Ascending aorta (tissue), 2 donors: ENCODE measurements at regions of chr9 and their contacts with region 1.

Region 1: DNA sequence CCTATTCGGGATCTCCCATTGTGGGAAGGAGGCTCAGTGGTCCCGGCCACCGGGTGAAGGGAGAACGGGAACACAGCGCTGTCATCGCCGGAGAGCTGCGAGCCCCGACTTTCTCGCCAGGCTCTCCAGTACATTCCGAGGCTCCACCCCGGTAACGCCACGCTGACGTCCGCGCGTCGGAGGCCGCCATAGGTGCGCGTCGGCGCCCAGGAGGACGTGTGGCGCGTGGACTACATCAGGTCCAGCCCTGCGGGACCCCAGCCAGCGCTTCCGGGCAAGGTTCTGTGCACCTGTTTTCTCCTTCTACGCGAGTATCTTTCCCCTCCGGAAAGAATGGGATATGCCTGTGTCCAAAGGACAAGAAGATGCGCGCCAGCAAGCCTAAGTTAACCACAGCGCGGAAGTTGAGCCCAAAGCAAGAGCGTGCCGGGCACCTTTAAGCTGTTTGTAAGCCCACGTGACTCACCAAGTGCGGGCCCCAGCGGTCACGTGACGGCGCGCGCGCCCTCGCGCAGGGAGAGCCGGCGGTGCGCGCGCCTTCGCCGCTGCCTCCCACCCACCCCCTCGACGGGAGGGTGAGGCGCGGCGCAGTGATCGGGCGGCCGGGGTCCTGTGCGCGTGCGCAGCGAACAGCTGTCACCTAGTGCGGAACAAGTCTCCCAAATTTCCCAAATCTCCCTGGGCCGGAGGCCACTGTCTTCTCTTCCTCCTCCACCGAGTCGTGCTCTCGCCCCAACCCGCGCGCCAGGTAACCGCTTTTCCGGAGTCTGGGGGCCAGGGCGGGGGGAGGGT is at the start of gene KDM4C:
- DNase-seq: peak; percentile 88 to 98
- H3K4me3 ChIP-seq: peak within 1 kb of the TSS; percentile 66 to 98
- H3K27ac ChIP-seq: peak within 1 kb of the TSS; percentile 98 to 99
- H3K4me1 ChIP-seq: peaks cover 3 to 4% of the 10 kb centered on the region in 2 donors
- H3K27me3 ChIP-seq: no peaks in the 10 kb centered on the region
- CTCF ChIP-seq: no peak
- total RNA-seq, gene KDM4C: 12.7 TPM

Region 2: GRCh38 chr9:6215562-6215961 is 542.1 kb before region 1 on chr9 and contains the start of gene IL33:
- intact Hi-C with region 1: loop called (anchors 5 kb)
- DNase-seq: no peak
- H3K4me3 ChIP-seq: peak within 1 kb of the TSS; percentile 44 to 53
- H3K27ac ChIP-seq: peak within 1 kb of the TSS; percentile 41 to 77
- H3K4me1 ChIP-seq: peaks cover 0 to 19% of the 10 kb centered on the region in 2 donors
- H3K27me3 ChIP-seq: no peaks in the 10 kb centered on the region
- CTCF ChIP-seq: no peak
- total RNA-seq, gene IL33: 38.0 TPM

Region 3: GRCh38 chr9:6566409-6567139 is 191.1 kb before region 1 on chr9:
- intact Hi-C with region 1: loop called (anchors 5 kb)
- DNase-seq: peak; percentile 40 to 88
- H3K4me3 ChIP-seq: peak overlapping the region in 1 of 2 donors; percentile 27
- H3K27ac ChIP-seq: peak overlapping the region; percentile 72 to 84
- H3K4me1 ChIP-seq: peaks cover 0 to 14% of the 10 kb centered on the region in 2 donors
- H3K27me3 ChIP-seq: no peaks in the 10 kb centered on the region
- CTCF ChIP-seq: no peak

Region 4: DNA sequence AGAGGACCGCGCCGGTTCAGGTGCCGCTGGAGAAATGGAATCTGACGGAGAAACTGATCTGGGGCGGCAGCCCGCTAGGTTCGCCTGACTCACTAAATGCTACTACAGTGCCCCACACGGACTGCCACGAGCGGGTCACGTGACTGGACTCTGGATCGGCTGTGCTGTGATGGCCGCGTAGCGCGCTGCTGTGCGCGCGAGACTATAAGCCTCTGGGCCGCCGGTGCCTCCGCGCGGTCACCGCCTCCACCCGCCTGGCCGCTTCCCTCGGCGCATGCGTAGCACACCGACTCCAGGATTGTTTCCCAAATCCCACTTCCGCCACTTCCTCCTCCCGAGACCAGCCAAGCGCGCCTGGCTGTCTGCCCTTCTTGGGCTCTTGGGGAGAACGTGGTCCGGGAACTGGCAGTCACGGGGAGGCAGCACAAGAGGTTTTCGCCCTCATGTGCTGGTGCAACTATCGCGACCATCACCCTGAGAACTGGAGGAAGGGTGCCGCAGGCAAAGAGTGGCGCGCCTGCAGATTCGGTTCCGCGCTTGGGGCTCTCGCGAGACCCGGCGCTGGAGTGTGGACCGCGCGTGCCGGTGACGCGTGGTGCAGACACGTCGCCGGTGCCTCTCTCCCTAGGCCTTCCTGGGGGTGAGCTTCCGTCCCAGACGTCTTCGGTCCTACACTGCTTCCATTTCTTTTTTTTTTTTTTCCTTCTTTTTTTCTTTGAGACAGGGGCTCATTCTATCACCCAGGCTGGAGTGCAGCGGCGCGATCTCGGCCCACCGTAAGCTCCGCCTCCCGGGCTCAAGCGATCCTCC is 76.3 kb before region 1 on chr9:
- intact Hi-C with region 1: loop called (anchors 1 kb)
- DNase-seq: peak; percentile 90 to 98
- H3K4me3 ChIP-seq: peak overlapping the region; percentile 71 to 72
- H3K27ac ChIP-seq: peak overlapping the region; percentile 95 to 96
- H3K4me1 ChIP-seq: peaks cover 0 to 10% of the 10 kb centered on the region in 2 donors
- H3K27me3 ChIP-seq: no peaks in the 10 kb centered on the region
- CTCF ChIP-seq: peak in 1 of 3 experiments; percentile 6

Region 5: GRCh38 chr9:6703898-6704639 is 53.6 kb before region 1 on chr9:
- intact Hi-C with region 1: loop called (anchors 1 kb)
- DNase-seq: peak; percentile 62 to 91
- H3K4me3 ChIP-seq: peak overlapping the region; percentile 62 to 72
- H3K27ac ChIP-seq: peak overlapping the region; percentile 68 to 69
- H3K4me1 ChIP-seq: no peaks in the 10 kb centered on the region
- H3K27me3 ChIP-seq: no peaks in the 10 kb centered on the region
- CTCF ChIP-seq: peak in 1 of 3 experiments; percentile 3